Endothelial cell of umbilical vein (primary cell): ENCODE measurements at regions of chr17 and their contacts with region 1.

Region 1: DNA sequence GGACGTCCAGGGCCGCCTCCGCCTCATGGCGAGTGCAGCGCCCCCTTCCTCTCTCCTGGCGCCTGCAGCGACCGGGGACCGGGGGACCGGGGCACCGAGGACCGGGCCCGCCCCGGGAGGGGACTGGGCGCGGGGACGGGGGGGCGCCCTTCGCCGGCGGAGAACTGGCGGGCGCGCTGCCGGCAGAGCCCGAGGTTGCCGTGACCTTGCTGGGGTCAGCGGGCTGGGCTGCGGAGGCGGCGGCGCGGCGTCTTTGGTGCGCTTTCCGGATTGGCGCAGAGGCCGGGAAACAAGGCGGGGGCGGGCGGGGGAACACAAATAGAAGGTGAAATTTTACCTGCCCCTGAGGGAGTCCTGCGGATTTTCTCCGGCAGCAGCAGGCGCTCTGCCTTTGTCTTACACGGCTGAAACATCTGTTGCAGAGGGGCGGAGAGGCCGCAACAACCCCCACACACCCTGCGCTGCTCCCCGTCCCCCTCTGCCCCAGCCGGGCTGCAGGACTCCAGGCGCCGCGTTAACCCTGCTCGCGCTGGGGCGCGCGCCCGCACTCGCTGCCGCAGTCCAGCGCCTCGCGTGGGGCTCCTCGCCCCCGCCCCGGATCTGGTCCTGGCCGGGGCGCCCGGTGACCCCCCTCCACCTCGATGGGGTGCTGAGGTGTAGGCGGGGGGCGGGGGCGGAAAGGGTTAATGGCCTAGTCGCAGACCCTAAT is 53.5 kb downstream of the SREBF1 start:
- DNase-seq: peak; percentile 32
- H3K4me3 ChIP-seq: peak overlapping the region; percentile 23 to 30 (median 26)
- H3K27ac ChIP-seq: no peak overlapping the region
- H3K4me1 ChIP-seq: peaks cover 30% of the 10 kb centered on the region
- H3K27me3 ChIP-seq: no peaks in the 10 kb centered on the region
- CTCF ChIP-seq: peak in 1 of 2 donors; percentile 8
- POLR2A ChIP-seq: no peak

Region 2: DNA sequence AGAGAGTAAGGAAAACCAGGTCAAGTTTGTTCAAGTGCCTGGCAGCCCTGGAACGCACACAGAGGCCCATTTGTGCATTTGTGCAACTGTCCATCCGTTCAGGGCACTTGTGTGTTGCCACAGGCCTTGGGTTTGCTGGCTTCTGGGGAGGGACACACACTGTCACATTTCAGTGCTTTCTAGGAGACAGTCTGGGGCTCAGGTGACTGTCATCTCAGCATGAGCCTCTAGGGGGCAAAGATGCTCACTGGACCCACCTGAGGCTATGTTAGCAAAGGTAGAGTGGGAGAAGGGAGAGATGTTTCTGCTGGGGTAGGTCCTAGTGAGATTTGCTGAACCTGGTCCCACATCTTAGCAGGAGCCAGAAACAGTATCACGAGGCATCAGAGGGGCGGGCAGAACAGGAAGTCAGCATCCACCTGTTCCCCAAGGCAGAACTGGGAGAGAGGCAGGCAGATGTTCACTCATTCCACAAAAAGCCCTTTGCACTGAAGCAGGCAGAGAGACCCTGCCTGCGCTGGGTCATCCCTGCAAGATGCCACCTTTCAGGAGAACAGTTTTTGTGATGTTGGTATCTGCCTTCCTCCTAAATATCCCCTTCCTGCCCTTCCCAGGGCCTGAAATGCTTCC is 53.5 kb before region 1 on chr17:
- CTCF ChIA-PET with region 1: no interaction called
- POLR2A ChIA-PET with region 1: no interaction called
- dilution Hi-C with region 1: no loop called
- intact Hi-C with region 1: loop called (anchors 5 kb)
- DNase-seq: no peak
- H3K4me3 ChIP-seq: no peak overlapping the region
- H3K27ac ChIP-seq: no peak overlapping the region
- H3K4me1 ChIP-seq: peaks cover 24% of the 10 kb centered on the region
- H3K27me3 ChIP-seq: no peaks in the 10 kb centered on the region
- CTCF ChIP-seq: peak; percentile 28 to 49
- POLR2A ChIP-seq: no peak